ENCODE measurements at regions of chr18 and their contacts with region 1.

Region 1: DNA sequence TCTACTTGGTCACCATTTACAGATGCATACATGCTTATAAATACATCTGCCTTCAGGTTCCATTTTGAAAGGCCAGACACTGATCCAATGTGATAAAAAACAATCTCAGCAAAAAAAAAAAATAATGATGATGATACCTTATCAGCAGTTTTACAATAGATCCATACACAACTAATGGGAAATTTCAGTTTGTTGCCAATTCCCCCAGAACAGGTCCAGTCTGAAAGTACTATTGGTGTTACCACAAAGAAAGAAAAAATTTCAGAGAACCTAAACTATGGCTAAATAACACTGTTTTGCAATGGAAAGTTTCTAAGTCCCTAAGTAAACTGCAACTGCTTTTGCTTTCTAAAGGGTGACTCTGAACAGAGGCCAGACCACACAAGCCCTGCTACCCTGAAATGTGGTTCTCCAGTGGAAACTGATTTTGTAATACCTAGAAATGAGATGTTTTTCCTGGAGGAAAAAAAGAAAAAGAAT is 54.1 kb downstream of the LPIN2 start:
- DNase-seq: no peak
- ATAC-seq: peak; percentile 65
- H3K4me3 ChIP-seq: peak overlapping the region; percentile 20; the same call in 1 of the 2 replicates
- H3K27ac ChIP-seq: peak overlapping the region; percentile 93
- H3K4me1 ChIP-seq: peaks cover 70% of the 10 kb centered on the region
- H3K27me3 ChIP-seq: no peaks in the 10 kb centered on the region
- CTCF ChIP-seq: no peak
- EP300 ChIP-seq: 0 out of 4 replicates have a peak, but pooled peaks have one; percentile 6 to 11
- POLR2A ChIP-seq: no peak
- RAD21 ChIP-seq: no peak

Region 2: GRCh38 chr18:2898186-2898640 is 60.6 kb before region 1 on chr18:
- CTCF ChIA-PET with region 1: no interaction called
- POLR2A ChIA-PET with region 1: no interaction called
- RAD21 ChIA-PET with region 1: no interaction called
- SMC1A ChIA-PET with region 1: no interaction called
- in situ Hi-C with region 1: no loop called
- intact Hi-C with region 1: no loop called
- DNase-seq: no peak
- ATAC-seq: peak; percentile 52
- H3K4me3 ChIP-seq: no peak overlapping the region
- H3K27ac ChIP-seq: no peak overlapping the region
- H3K4me1 ChIP-seq: 0 out of 2 replicates have a peak, but pooled peaks cover 3% of the 10 kb centered on the region
- H3K27me3 ChIP-seq: no peaks in the 10 kb centered on the region; a peak in 1 of 4 replicates
- CTCF ChIP-seq: no peak
- EP300 ChIP-seq: no peak
- POLR2A ChIP-seq: no peak
- RAD21 ChIP-seq: no peak

Region 3: GRCh38 chr18:2939317-2939716 is 19.5 kb before region 1 on chr18:
- CTCF ChIA-PET with region 1: interaction called, 13 read pairs
- POLR2A ChIA-PET with region 1: interaction called, 3 read pairs
- RAD21 ChIA-PET with region 1: interaction called, 3 read pairs
- SMC1A ChIA-PET with region 1: interaction called, 18 read pairs
- in situ Hi-C with region 1: no loop called
- intact Hi-C with region 1: no loop called
- DNase-seq: no peak
- ATAC-seq: no peak
- H3K4me3 ChIP-seq: no peak overlapping the region
- H3K27ac ChIP-seq: no peak overlapping the region
- H3K4me1 ChIP-seq: no peaks in the 10 kb centered on the region
- H3K27me3 ChIP-seq: no peaks in the 10 kb centered on the region
- CTCF ChIP-seq: no peak
- EP300 ChIP-seq: no peak
- POLR2A ChIP-seq: no peak
- RAD21 ChIP-seq: no peak

Region 4: DNA sequence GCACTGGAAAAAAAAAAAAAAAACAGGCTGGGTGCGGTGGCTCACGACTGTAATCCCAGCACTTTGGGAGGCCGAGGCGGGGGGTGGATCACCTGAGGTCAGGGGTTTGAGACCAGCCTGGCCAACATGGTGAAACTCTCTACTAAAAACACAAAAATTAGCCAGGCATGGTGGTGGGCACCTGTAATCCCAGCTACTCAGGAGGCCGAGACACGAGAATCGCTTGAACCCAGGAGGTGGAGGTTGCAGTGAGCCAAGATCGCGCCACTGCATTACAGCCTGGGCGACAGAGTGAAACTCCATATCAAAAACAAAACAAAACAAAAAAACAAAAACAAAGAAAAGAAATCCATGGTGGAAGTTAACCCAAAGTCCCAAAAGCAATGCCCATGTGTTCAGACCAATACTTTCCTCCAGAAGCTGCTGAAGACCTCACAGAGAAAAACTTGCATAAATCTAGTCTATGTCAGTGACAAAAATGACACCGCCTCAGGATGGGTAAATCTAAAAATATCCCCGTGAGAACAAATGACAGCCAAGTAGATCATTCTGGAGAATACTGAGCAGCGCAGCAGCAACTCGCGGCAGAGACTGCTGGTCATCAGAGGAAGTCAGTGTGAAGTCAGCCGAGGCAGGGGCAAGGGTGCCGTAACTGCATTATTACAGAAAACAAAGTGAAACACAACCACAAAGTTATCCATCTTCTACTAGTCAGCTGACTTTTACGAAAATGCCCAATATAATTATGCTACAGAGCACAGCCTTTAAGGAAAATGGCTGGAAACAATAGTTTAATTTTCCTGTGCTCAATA is 13.1 kb after region 1 on chr18:
- CTCF ChIA-PET with region 1: interaction called, 174 read pairs
- POLR2A ChIA-PET with region 1: interaction called, 177 read pairs
- RAD21 ChIA-PET with region 1: interaction called, 155 read pairs
- SMC1A ChIA-PET with region 1: interaction called, 180 read pairs
- in situ Hi-C with region 1: no loop called
- intact Hi-C with region 1: loop called (anchors 2 kb)
- DNase-seq: peak; percentile 90
- ATAC-seq: peak; percentile 89
- H3K4me3 ChIP-seq: peak overlapping the region; percentile 60
- H3K27ac ChIP-seq: peak overlapping the region; percentile 94
- H3K4me1 ChIP-seq: peaks cover 51% of the 10 kb centered on the region
- H3K27me3 ChIP-seq: no peaks in the 10 kb centered on the region
- CTCF ChIP-seq: no peak
- EP300 ChIP-seq: peak; percentile 32 to 48; a peak in 1 of 4 replicates
- POLR2A ChIP-seq: peak; percentile 78
- RAD21 ChIP-seq: no peak

Region 5: GRCh38 chr18:2985628-2986027 is 26.8 kb after region 1 on chr18:
- CTCF ChIA-PET with region 1: interaction called, 285 read pairs
- POLR2A ChIA-PET with region 1: interaction called, 124 read pairs
- RAD21 ChIA-PET with region 1: interaction called, 112 read pairs
- SMC1A ChIA-PET with region 1: interaction called, 187 read pairs
- in situ Hi-C with region 1: no loop called
- intact Hi-C with region 1: loop called (anchors 2 kb)
- DNase-seq: no peak
- ATAC-seq: peak; percentile 67
- H3K4me3 ChIP-seq: no peak overlapping the region
- H3K27ac ChIP-seq: no peak overlapping the region
- H3K4me1 ChIP-seq: peaks cover 21% of the 10 kb centered on the region
- H3K27me3 ChIP-seq: no peaks in the 10 kb centered on the region
- CTCF ChIP-seq: peak; percentile 56 to 71 (median 62)
- EP300 ChIP-seq: no peak
- POLR2A ChIP-seq: no peak
- RAD21 ChIP-seq: peak; percentile 81

Region 6: DNA sequence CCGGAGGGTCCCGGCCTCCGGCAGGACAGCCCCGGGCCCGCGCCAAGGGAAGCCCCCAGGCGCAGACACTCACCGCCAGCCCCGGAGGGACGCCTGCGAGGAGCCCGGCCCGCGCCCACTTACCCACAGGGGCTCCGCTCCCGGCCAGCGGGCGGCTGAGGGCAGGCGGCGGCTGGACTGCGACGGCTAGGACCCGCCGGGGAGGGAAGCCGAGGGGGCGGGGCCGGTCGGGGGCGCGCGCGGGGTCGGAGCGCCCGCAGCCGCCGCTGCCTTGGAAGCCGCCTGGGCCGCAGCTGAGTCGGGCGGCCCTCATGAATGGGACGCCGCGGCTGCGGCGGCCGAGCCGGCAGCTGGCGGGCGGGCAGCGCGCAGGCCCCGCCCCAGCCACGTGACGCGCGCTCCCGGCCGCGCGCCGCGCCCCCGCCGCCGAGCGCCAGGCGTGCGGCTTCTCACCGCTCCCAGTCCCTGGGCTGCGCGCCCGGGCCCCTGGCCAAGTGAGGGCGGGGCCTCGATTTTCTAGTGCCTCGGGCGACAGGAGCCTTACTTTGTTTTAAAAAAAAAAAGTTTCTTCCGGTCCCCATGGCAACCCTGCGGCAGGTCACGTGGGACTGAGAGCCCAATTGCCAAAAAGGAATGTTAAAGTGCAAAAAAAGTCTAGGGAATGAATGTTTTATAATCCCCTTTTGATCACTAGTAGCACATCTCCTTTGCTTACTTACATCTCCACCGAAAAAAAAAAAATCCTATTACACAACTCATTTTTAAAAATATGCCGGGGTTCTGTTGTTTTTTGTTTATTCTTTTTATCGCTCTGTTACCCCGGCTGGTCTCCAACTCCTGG is 54.3 kb after region 1 on chr18 and contains the start of gene LPIN2:
- CTCF ChIA-PET with region 1: no interaction called
- POLR2A ChIA-PET with region 1: interaction called, 5 read pairs
- RAD21 ChIA-PET with region 1: no interaction called
- SMC1A ChIA-PET with region 1: no interaction called
- in situ Hi-C with region 1: no loop called
- intact Hi-C with region 1: loop called (anchors 2 kb)
- DNase-seq: peak; percentile 71
- ATAC-seq: peak; percentile 88
- H3K4me3 ChIP-seq: peak within 1 kb of the TSS; percentile 74
- H3K27ac ChIP-seq: peak within 1 kb of the TSS; percentile 71
- H3K4me1 ChIP-seq: peaks cover 14% of the 10 kb centered on the region
- H3K27me3 ChIP-seq: no peaks in the 10 kb centered on the region
- CTCF ChIP-seq: no peak
- EP300 ChIP-seq: peak in 1 of 2 experiments; percentile 44; a peak in 1 of 4 replicates
- POLR2A ChIP-seq: peak; percentile 61; the same call in 1 of the 2 replicates
- RAD21 ChIP-seq: no peak
- polyA plus RNA-seq, gene LPIN2: 4.1 to 4.5 TPM

Region 7: GRCh38 chr18:3380384-3380961 is 421.6 kb after region 1 on chr18:
- CTCF ChIA-PET with region 1: no interaction called
- POLR2A ChIA-PET with region 1: no interaction called
- RAD21 ChIA-PET with region 1: no interaction called
- SMC1A ChIA-PET with region 1: no interaction called
- in situ Hi-C with region 1: no loop called
- intact Hi-C with region 1: no loop called
- DNase-seq: no peak
- ATAC-seq: peak; percentile 37
- H3K4me3 ChIP-seq: no peak overlapping the region
- H3K27ac ChIP-seq: no peak overlapping the region
- H3K4me1 ChIP-seq: peaks cover 15% of the 10 kb centered on the region
- H3K27me3 ChIP-seq: peaks cover 0 to 2% of the 10 kb centered on the region in 2 experiments; a peak in 1 of 4 replicates
- CTCF ChIP-seq: peak in 1 of 3 experiments; percentile 8; a peak in 1 of 6 replicates
- EP300 ChIP-seq: no peak
- POLR2A ChIP-seq: no peak
- RAD21 ChIP-seq: peak; percentile 38; the same call in 1 of the 2 replicates